ENCODE measurements at regions of chr3 and their contacts with region 1.

Region 1: DNA sequence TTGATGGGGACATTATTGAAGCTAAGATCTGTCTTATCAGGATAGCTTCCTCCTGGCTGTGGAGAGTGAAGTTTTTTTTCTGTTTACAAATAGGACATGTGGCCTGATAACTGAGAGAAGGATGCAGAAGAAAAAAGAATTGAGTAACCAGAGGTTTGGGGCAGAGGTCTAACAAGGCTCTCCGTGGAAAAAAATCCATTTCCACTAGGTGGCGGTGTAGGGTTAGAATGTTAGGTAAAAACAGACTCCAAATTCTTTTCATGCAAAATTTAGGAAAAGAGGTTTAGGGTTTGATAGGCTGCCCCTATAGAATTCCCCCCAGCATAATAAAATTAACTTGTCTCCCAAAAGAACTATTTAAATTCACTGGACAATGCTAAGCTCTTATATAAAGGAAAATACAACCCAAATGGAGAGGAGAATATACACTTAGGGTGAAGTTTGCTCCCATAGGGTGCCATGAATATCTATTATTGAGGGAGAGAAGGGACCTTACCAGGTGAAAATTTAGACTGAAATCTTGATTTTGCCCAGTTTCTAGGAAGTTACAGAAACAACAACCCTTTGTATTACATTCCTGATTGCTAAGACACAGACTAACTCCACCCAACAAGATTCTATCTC is 1560.4 kb downstream of the OTOL1 start:
- DNase-seq: peak; percentile 70
- H3K4me3 Mint-ChIP-seq: no peak overlapping the region
- H3K27ac Mint-ChIP-seq: no peak overlapping the region
- H3K4me1 Mint-ChIP-seq: no peaks in the 10 kb centered on the region
- H3K27me3 Mint-ChIP-seq: no peaks in the 10 kb centered on the region
- CTCF ChIP-seq: peak; percentile 68

Region 2: GRCh38 chr3:161851941-161852566 is 1204.9 kb before region 1 on chr3:
- CTCF ChIA-PET with region 1: no interaction called
- POLR2A ChIA-PET with region 1: no interaction called
- intact Hi-C with region 1: loop called (anchors 5 kb)
- DNase-seq: peak; percentile 73
- H3K4me3 Mint-ChIP-seq: no peak overlapping the region
- H3K27ac Mint-ChIP-seq: no peak overlapping the region
- H3K4me1 Mint-ChIP-seq: no peaks in the 10 kb centered on the region
- H3K27me3 Mint-ChIP-seq: no peaks in the 10 kb centered on the region
- CTCF ChIP-seq: peak; percentile 91

Region 3: GRCh38 chr3:163043074-163043473 is 13.9 kb before region 1 on chr3:
- CTCF ChIA-PET with region 1: interaction called, 40 read pairs
- POLR2A ChIA-PET with region 1: no interaction called
- intact Hi-C with region 1: no loop called
- DNase-seq: peak; percentile 25
- H3K4me3 Mint-ChIP-seq: no peak overlapping the region
- H3K27ac Mint-ChIP-seq: no peak overlapping the region
- H3K4me1 Mint-ChIP-seq: peaks cover 6% of the 10 kb centered on the region
- H3K27me3 Mint-ChIP-seq: no peaks in the 10 kb centered on the region
- CTCF ChIP-seq: no peak

Region 4: GRCh38 chr3:163185721-163186350 is 128.8 kb after region 1 on chr3:
- CTCF ChIA-PET with region 1: no interaction called
- POLR2A ChIA-PET with region 1: no interaction called
- intact Hi-C with region 1: no loop called
- DNase-seq: no peak
- H3K4me3 Mint-ChIP-seq: no peak overlapping the region
- H3K27ac Mint-ChIP-seq: no peak overlapping the region
- H3K4me1 Mint-ChIP-seq: no peaks in the 10 kb centered on the region
- H3K27me3 Mint-ChIP-seq: no peaks in the 10 kb centered on the region
- CTCF ChIP-seq: no peak

Region 5: DNA sequence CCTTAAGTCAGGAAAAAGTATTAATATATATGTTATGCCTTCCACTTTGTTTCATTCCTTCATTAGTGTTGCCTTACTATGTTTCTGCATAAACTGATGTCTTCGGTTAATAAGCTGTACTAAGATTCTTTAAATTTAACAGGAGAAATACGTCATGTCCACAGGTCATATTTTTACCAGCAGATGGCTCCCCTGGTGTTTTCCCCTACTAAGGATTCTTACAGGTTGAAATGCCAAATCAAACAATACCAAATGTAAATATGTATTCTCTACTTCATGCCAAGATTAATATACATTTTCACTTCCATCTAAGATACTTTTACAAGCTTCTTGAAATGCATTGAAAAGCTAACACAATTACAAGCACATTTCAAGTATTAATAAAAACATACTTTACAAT is 419.2 kb after region 1 on chr3:
- CTCF ChIA-PET with region 1: interaction called, 10 read pairs
- POLR2A ChIA-PET with region 1: no interaction called
- intact Hi-C with region 1: no loop called
- DNase-seq: peak; percentile 43
- H3K4me3 Mint-ChIP-seq: no peak overlapping the region
- H3K27ac Mint-ChIP-seq: no peak overlapping the region
- H3K4me1 Mint-ChIP-seq: peaks cover 5% of the 10 kb centered on the region
- H3K27me3 Mint-ChIP-seq: no peaks in the 10 kb centered on the region
- CTCF ChIP-seq: no peak

Region 6: GRCh38 chr3:163951397-163951987 is 894.5 kb after region 1 on chr3:
- CTCF ChIA-PET with region 1: interaction called, 24 read pairs
- POLR2A ChIA-PET with region 1: no interaction called
- intact Hi-C with region 1: loop called (anchors 5 kb)
- DNase-seq: peak; percentile 26
- H3K4me3 Mint-ChIP-seq: no peak overlapping the region
- H3K27ac Mint-ChIP-seq: no peak overlapping the region
- H3K4me1 Mint-ChIP-seq: no peaks in the 10 kb centered on the region
- H3K27me3 Mint-ChIP-seq: no peaks in the 10 kb centered on the region
- CTCF ChIP-seq: peak; percentile 44